Gastrocnemius medialis (tissue), 4 donors: ENCODE measurements at regions of chr9 and their contacts with region 1.

Region 1: GRCh38 chr9:112112941-112113681 is 62.0 kb downstream of the SUSD1 start:
- DNase-seq: no peak
- ATAC-seq: no peak
- H3K4me3 ChIP-seq: no peak overlapping the region
- H3K27ac ChIP-seq: no peak overlapping the region
- H3K4me1 ChIP-seq: no peaks in the 10 kb centered on the region
- H3K27me3 ChIP-seq: no peaks in the 10 kb centered on the region
- CTCF ChIP-seq: peak in 2 of 5 experiments; percentile 12 to 28
- POLR2A ChIP-seq: no peak

Region 2: GRCh38 chr9:112224401-112225289 is 111.5 kb after region 1 on chr9:
- in situ Hi-C with region 1: loop called in 1 of 4 experiments (anchors 25 kb)
- intact Hi-C with region 1: no loop called
- DNase-seq: no peak
- ATAC-seq: no peak
- H3K4me3 ChIP-seq: no peak overlapping the region
- H3K27ac ChIP-seq: no peak overlapping the region
- H3K4me1 ChIP-seq: no peaks in the 10 kb centered on the region
- H3K27me3 ChIP-seq: no peaks in the 10 kb centered on the region
- CTCF ChIP-seq: no peak
- POLR2A ChIP-seq: no peak